B cell (primary cell): ENCODE measurements at regions of chr4 and their contacts with region 1.

Region 1: GRCh38 chr4:166165829-166166420 is 292.9 kb downstream of the TLL1 start:
- DNase-seq: peak; percentile 41
- ATAC-seq: no peak
- H3K4me3 ChIP-seq: no peak overlapping the region
- H3K4me3 Mint-ChIP-seq: no peak overlapping the region
- H3K27ac ChIP-seq: no peak overlapping the region
- H3K27ac Mint-ChIP-seq: no peak overlapping the region
- H3K4me1 ChIP-seq: no peaks in the 10 kb centered on the region
- H3K4me1 Mint-ChIP-seq: no peaks in the 10 kb centered on the region
- H3K27me3 ChIP-seq: no peaks in the 10 kb centered on the region
- H3K27me3 Mint-ChIP-seq: no peaks in the 10 kb centered on the region
- CTCF ChIP-seq: peak; percentile 70

Region 2: GRCh38 chr4:166198041-166198440 is 32.1 kb after region 1 on chr4:
- CTCF ChIA-PET with region 1: no interaction called
- POLR2A ChIA-PET with region 1: no interaction called
- intact Hi-C with region 1: no loop called
- DNase-seq: no peak
- ATAC-seq: no peak
- H3K4me3 ChIP-seq: no peak overlapping the region
- H3K4me3 Mint-ChIP-seq: no peak overlapping the region
- H3K27ac ChIP-seq: no peak overlapping the region
- H3K27ac Mint-ChIP-seq: no peak overlapping the region
- H3K4me1 ChIP-seq: no peaks in the 10 kb centered on the region
- H3K4me1 Mint-ChIP-seq: no peaks in the 10 kb centered on the region
- H3K27me3 ChIP-seq: no peaks in the 10 kb centered on the region
- H3K27me3 Mint-ChIP-seq: no peaks in the 10 kb centered on the region
- CTCF ChIP-seq: no peak

Region 3: DNA sequence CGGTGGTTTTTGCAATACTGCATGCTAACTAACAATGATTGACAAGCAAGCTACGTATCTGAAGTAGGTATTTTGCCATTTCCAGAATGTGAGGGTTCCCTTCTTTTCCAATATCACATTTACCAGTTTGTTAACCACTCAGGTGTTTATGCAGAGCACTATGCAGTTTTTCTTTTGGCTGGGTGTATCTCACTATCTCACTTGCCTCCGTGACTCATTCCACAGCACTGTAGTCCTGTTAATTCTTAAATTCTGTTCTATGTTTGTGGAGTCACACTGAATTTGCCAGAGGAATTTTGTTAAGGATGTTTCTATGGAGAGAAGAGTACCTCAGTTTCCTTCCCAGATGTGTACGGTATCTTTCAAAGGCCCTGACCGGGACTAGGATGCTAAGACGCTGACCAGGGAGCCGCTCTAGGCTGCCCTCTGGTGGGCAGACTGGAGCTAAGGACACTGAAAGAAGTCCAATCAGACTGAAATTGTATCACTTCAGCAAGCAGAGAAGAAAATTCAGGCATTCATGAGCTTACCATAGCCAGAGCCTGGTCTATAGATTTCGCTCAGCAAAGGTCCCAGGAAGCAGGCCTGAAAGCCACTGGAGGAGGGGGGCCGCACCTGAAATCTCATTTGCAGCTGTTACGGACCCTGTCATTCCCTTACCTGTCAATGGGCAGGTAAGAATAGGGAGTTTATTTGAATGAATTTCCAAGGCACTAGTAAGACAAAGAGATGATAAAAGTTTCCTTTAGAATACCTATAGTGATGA is 1456.7 kb after region 1 on chr4:
- CTCF ChIA-PET with region 1: no interaction called
- POLR2A ChIA-PET with region 1: no interaction called
- intact Hi-C with region 1: loop called (anchors 5 kb)
- DNase-seq: peak; percentile 9
- ATAC-seq: no peak
- H3K4me3 ChIP-seq: no peak overlapping the region
- H3K4me3 Mint-ChIP-seq: no peak overlapping the region
- H3K27ac ChIP-seq: no peak overlapping the region
- H3K27ac Mint-ChIP-seq: no peak overlapping the region
- H3K4me1 ChIP-seq: no peaks in the 10 kb centered on the region
- H3K4me1 Mint-ChIP-seq: no peaks in the 10 kb centered on the region
- H3K27me3 ChIP-seq: no peaks in the 10 kb centered on the region
- H3K27me3 Mint-ChIP-seq: no peaks in the 10 kb centered on the region
- CTCF ChIP-seq: no peak

Region 4: DNA sequence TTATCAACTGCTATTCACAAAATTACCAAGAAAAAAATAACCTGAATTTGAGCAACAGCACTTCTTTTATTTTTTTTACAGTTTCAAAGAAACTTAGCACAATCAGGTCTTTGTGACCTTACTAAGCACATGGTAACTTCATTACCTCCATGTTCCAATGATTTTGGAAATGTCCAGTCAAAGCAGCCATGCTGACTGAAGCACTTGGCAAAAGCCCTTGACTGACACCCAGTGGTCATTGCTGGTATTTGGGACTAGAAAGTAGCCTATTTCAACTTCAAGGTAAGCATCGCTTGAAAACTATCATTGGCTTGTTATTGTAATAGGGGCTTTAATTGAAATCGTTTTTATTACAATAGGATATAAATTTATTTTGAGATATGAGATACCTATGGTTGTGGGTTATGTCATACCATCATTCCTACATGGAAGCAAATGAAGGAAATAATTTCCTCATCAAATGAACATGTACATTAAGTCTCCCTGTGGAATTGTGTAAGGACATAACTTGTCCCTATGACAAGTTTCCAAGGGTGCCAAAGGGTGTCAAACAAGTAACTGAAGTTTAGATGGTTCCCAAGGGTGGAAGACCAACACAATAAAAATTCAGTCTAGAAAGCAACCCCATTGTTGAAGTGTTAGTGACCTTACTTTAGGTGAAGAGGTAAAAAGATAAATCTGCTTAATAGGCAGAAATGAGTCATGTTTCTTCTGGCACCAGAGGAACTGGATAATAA is 1911.2 kb after region 1 on chr4:
- CTCF ChIA-PET with region 1: no interaction called
- POLR2A ChIA-PET with region 1: no interaction called
- intact Hi-C with region 1: loop called (anchors 5 kb)
- DNase-seq: peak; percentile 14
- ATAC-seq: peak; percentile 36
- H3K4me3 ChIP-seq: no peak overlapping the region
- H3K4me3 Mint-ChIP-seq: no peak overlapping the region
- H3K27ac ChIP-seq: no peak overlapping the region
- H3K27ac Mint-ChIP-seq: no peak overlapping the region
- H3K4me1 ChIP-seq: no peaks in the 10 kb centered on the region
- H3K4me1 Mint-ChIP-seq: no peaks in the 10 kb centered on the region
- H3K27me3 ChIP-seq: no peaks in the 10 kb centered on the region
- H3K27me3 Mint-ChIP-seq: no peaks in the 10 kb centered on the region
- CTCF ChIP-seq: peak; percentile 82